B cell (primary cell): ENCODE measurements at regions of chr15 and their contacts with region 1.

Region 1: GRCh38 chr15:65318870-65319356 is 14.4 kb downstream of the RNU5B-1 start:
- DNase-seq: peak; percentile 81
- ATAC-seq: peak; percentile 99
- H3K4me3 ChIP-seq: no peak overlapping the region
- H3K4me3 Mint-ChIP-seq: no peak overlapping the region
- H3K27ac ChIP-seq: no peak overlapping the region
- H3K27ac Mint-ChIP-seq: no peak overlapping the region
- H3K4me1 ChIP-seq: no peaks in the 10 kb centered on the region
- H3K4me1 Mint-ChIP-seq: no peaks in the 10 kb centered on the region
- H3K27me3 ChIP-seq: peaks cover 0 to 6% (median 0%) of the 10 kb centered on the region in 4 experiments
- H3K27me3 Mint-ChIP-seq: peaks cover 16% of the 10 kb centered on the region
- CTCF ChIP-seq: peak; percentile 91

Region 2: DNA sequence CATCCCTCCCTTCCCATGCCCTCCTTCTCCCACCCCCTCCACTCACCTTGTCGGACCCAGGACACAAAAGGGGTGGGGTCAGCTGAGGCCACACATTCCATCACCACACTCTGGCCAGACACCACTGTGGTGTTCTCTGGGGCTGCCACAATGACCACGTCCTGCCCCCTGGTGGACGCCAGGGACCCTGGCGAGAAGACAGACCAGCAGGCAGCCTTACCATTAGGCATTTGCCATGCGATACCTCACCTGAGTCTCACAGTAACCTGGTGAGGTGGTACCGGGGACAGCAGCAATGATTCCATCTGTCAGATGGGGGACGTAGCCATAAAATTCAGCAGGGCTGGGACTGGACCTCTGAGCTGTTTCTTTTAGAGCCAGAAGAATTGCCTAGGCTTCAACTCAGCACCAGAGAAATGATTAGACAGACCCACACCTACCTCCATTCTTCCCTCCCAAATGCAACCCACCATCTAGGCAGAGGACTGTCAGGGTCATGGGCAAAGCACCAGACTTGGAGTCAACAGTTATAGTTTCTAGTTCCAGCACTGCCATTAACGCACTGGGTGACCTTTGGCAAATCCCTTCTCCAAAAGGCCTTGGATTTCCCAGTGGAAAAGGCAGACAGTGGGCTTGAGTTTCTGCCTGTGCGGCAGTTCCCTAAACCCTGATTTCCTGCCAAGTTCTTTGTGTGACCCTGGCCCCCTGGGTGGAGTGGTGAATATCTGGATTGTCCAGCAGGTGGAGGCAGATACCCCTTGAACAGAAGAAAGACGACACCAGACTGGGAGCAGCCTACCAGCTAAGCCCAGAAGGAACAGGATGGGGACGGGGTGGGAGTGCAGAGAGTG is 82.1 kb after region 1 on chr15:
- CTCF ChIA-PET with region 1: interaction called, 15 read pairs
- POLR2A ChIA-PET with region 1: no interaction called
- intact Hi-C with region 1: loop called (anchors 1 kb)
- DNase-seq: peak; percentile 54
- ATAC-seq: peak; percentile 58
- H3K4me3 ChIP-seq: no peak overlapping the region
- H3K4me3 Mint-ChIP-seq: no peak overlapping the region
- H3K27ac ChIP-seq: no peak overlapping the region
- H3K27ac Mint-ChIP-seq: no peak overlapping the region
- H3K4me1 ChIP-seq: peaks cover 7 to 10% of the 10 kb centered on the region in 2 donors
- H3K4me1 Mint-ChIP-seq: peaks cover 8% of the 10 kb centered on the region
- H3K27me3 ChIP-seq: peaks cover 0 to 22% (median 19%) of the 10 kb centered on the region in 4 experiments
- H3K27me3 Mint-ChIP-seq: peaks cover 47% of the 10 kb centered on the region
- CTCF ChIP-seq: peak; percentile 64